Breast epithelium (tissue), 4 donors: ENCODE measurements at regions of chr20 and their contacts with region 1.

Region 1: DNA sequence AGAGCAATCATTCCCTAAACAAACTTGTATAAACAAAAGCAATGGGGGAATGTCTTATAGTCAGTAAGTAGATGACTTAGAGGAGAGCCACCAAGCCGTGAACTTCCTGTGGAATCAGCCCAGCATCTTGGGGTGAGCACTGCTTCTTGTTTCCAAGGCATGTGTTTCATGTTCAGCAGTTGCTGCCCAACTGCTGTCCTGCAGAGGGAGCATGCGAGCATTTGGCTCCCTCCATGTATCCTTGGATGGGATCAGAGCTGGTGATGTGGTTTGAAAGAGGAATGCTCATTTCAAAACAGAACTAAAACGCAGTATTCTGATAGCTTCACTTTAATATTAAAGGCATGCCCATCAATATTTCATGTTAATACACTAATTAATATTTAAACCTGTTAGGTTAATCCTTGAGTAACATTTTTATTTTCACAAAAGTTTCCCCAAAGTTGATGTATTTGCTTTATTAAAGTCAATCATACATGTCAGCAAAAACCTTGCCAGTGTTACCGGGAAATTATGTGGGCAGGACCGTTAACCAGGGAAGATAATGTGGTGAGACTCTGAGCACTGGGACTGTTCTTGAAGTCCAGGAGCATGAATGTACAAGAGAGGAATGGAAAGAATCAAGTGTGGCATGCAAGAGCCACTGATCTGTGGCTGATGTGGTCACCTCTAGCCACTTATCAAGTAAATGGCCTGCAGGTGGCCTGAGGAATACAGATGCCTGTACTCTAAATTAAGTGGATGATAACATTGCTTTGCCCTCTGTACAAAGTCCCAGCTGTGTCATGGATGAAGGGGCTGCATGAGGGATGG is 172.2 kb upstream of the GGTLC1 start:
- DNase-seq: no peak
- H3K4me3 ChIP-seq: no peak overlapping the region
- H3K27ac ChIP-seq: no peak overlapping the region
- H3K4me1 ChIP-seq: no peaks in the 10 kb centered on the region
- H3K27me3 ChIP-seq: no peaks in the 10 kb centered on the region
- CTCF ChIP-seq: peak in 2 of 3 donors; percentile 37 to 63
- POLR2A ChIP-seq: no peak

Region 2: DNA sequence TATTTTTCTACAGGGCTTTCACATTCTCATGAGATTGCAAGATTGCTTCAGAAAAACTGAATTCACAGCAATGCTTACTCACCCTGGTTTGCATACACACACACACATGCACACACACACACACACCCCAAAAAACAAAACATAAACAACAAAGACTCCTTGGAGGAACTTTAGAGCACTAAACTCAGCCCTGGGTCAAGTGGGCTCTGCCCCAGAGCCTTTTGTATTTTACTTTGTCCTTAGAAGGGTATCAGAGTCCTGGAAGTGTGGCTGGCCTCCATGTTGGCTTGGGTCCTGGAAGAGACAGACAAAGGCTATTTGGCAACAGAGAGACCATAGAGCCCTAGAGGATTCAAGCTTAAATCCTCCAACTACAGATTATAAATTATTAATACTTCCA is 547.1 kb before region 1 on chr20:
- intact Hi-C with region 1: loop called (anchors 10 kb)
- DNase-seq: no peak
- H3K4me3 ChIP-seq: no peak overlapping the region
- H3K27ac ChIP-seq: peak overlapping the region in 1 of 2 donors; percentile 77
- H3K4me1 ChIP-seq: no peaks in the 10 kb centered on the region
- H3K27me3 ChIP-seq: no peaks in the 10 kb centered on the region
- CTCF ChIP-seq: no peak
- POLR2A ChIP-seq: no peak

Region 3: GRCh38 chr20:24420572-24420971 is 259.8 kb after region 1 on chr20:
- intact Hi-C with region 1: no loop called
- DNase-seq: no peak
- H3K4me3 ChIP-seq: no peak overlapping the region
- H3K27ac ChIP-seq: no peak overlapping the region
- H3K4me1 ChIP-seq: no peaks in the 10 kb centered on the region
- H3K27me3 ChIP-seq: peaks cover 0 to 3% of the 10 kb centered on the region in 2 donors
- CTCF ChIP-seq: no peak
- POLR2A ChIP-seq: no peak

Region 4: GRCh38 chr20:24501764-24502556 is 341.2 kb after region 1 on chr20:
- intact Hi-C with region 1: no loop called
- DNase-seq: no peak
- H3K4me3 ChIP-seq: no peak overlapping the region
- H3K27ac ChIP-seq: no peak overlapping the region
- H3K4me1 ChIP-seq: no peaks in the 10 kb centered on the region
- H3K27me3 ChIP-seq: peaks cover 0 to 7% of the 10 kb centered on the region in 2 donors
- CTCF ChIP-seq: no peak
- POLR2A ChIP-seq: no peak